IMR-90 (cell line): ENCODE measurements at regions of chr15 and their contacts with region 1.

Region 1: GRCh38 chr15:40743921-40744814 is 10.9 kb downstream of the RMDN3 start:
- DNase-seq: peak; percentile 82
- ATAC-seq: peak; percentile 82
- H3K4me3 ChIP-seq: no peak overlapping the region
- H3K27ac ChIP-seq: no peak overlapping the region
- H3K4me1 ChIP-seq: peaks cover 2% of the 10 kb centered on the region; the same call in 1 of the 2 replicates
- H3K27me3 ChIP-seq: no peaks in the 10 kb centered on the region
- CTCF ChIP-seq: no peak
- POLR2A ChIP-seq: no peak
- RAD21 ChIP-seq: no peak

Region 2: DNA sequence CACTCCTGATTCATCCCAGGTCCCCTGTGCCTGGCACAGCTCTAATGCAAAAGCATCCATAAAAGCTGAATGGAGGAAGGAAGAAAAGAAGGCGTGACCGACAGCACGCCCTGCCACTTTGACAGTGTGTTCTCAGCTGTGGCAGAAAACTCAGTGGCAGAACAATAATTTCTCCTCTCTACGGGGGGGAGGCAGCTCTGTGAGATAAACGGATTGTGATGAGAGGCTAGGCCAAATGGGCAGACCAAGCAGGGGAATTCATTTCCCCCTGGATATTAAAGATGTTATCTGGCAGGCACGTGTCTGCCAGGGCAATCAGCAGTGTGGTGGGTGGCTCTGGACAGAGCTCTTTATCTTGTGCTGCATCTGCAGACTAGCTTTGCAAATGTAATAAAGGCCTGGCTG is 12.7 kb after region 1 on chr15:
- CTCF ChIA-PET with region 1: no interaction called
- POLR2A ChIA-PET with region 1: interaction called, 14 read pairs
- dilution Hi-C with region 1: no loop called
- in situ Hi-C with region 1: no loop called
- intact Hi-C with region 1: no loop called
- DNase-seq: no peak
- ATAC-seq: no peak
- H3K4me3 ChIP-seq: no peak overlapping the region
- H3K27ac ChIP-seq: no peak overlapping the region
- H3K4me1 ChIP-seq: peaks cover 1% of the 10 kb centered on the region; the same call in 1 of the 2 replicates
- H3K27me3 ChIP-seq: no peaks in the 10 kb centered on the region; the same call in 1 of the 2 replicates
- CTCF ChIP-seq: no peak
- POLR2A ChIP-seq: no peak
- RAD21 ChIP-seq: no peak